ENCODE measurements at regions of chr1 and their contacts with region 1.

Region 1: GRCh38 chr1:196558424-196558823 is 49.8 kb downstream of the KCNT2 start:
- DNase-seq: peak; percentile 38
- ATAC-seq: peak; percentile 82
- H3K4me3 ChIP-seq: peak overlapping the region; percentile 63
- H3K27ac ChIP-seq: no peak overlapping the region
- H3K4me1 ChIP-seq: no peaks in the 10 kb centered on the region
- H3K27me3 ChIP-seq: no peaks in the 10 kb centered on the region
- CTCF ChIP-seq: no peak

Region 2: DNA sequence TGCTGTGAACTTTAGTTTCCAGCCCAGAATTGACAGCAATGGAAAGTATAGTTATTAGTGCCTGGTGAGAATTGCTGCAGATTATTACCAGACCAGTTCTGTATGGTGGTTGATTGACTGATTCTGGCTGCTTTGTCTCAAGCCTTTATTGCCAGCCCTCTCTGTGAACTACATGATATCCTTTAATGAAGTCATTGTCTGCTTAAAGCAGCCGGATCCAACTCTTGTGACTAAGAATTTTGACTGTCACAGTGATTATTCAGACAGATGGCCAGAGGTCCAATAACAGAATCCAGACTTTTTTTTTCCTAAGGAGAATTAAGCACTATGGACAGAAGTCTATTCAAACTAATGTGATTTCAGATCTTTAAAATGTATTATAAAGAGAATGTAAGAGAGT is 1823.5 kb before region 1 on chr1:
- CTCF ChIA-PET with region 1: no interaction called
- POLR2A ChIA-PET with region 1: interaction called, 24 read pairs
- intact Hi-C with region 1: no loop called
- DNase-seq: no peak
- ATAC-seq: no peak
- H3K4me3 ChIP-seq: no peak overlapping the region
- H3K27ac ChIP-seq: no peak overlapping the region
- H3K4me1 ChIP-seq: no peaks in the 10 kb centered on the region
- H3K27me3 ChIP-seq: no peaks in the 10 kb centered on the region
- CTCF ChIP-seq: no peak

Region 3: GRCh38 chr1:196400478-196401451 is 157.7 kb before region 1 on chr1:
- CTCF ChIA-PET with region 1: no interaction called
- POLR2A ChIA-PET with region 1: no interaction called
- intact Hi-C with region 1: loop called (anchors 10 kb)
- DNase-seq: peak; percentile 43
- ATAC-seq: peak; percentile 59
- H3K4me3 ChIP-seq: no peak overlapping the region
- H3K27ac ChIP-seq: no peak overlapping the region
- H3K4me1 ChIP-seq: 0 out of 2 replicates have a peak, but pooled peaks cover 9% of the 10 kb centered on the region
- H3K27me3 ChIP-seq: no peaks in the 10 kb centered on the region
- CTCF ChIP-seq: no peak

Measured in PC-3 (cell line).